PC-9 (cell line): ENCODE measurements at regions of chr9 and their contacts with region 1.

Region 1: DNA sequence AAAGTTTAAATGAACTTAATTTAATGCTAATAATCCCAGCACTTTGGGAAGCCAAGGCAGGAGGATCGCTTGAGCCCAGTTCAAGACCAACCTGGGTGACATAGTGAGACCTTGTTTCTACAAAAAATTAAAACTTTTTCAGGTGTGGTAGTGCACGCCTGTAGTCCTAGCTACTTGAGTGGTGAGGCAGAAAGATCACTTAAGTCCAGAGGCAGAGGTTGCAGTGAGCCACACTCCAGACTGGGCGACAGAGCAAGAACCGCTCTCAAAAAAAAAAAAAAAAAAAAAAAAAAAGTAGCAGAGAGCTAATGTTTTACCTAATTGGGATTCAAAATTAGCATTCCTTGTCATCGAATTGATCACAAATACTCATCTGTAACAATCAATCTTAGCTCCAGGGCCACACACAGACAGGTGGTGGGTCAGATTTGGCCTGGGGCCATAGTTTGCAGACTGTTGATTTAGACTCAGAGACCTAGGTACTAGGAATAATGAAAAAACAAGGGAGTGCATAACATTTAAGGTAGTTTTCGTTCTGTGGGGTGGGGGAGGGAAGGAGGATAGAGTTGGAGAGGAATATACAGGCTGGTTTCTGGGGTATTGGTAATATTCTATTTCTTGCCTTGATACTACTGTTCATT is 21.4 kb downstream of the HSDL2 start:
- DNase-seq: no peak
- H3K4me3 ChIP-seq: no peak overlapping the region
- H3K27ac ChIP-seq: no peak overlapping the region
- H3K4me1 ChIP-seq: no peaks in the 10 kb centered on the region
- H3K27me3 ChIP-seq: no peaks in the 10 kb centered on the region
- CTCF ChIP-seq: no peak

Region 2: GRCh38 chr9:112411626-112412027 is 10.3 kb after region 1 on chr9:
- CTCF ChIA-PET with region 1: no interaction called
- POLR2A ChIA-PET with region 1: interaction called, 13 read pairs
- intact Hi-C with region 1: no loop called
- DNase-seq: no peak
- H3K4me3 ChIP-seq: no peak overlapping the region
- H3K27ac ChIP-seq: no peak overlapping the region
- H3K4me1 ChIP-seq: no peaks in the 10 kb centered on the region
- H3K27me3 ChIP-seq: no peaks in the 10 kb centered on the region
- CTCF ChIP-seq: no peak

Region 3: DNA sequence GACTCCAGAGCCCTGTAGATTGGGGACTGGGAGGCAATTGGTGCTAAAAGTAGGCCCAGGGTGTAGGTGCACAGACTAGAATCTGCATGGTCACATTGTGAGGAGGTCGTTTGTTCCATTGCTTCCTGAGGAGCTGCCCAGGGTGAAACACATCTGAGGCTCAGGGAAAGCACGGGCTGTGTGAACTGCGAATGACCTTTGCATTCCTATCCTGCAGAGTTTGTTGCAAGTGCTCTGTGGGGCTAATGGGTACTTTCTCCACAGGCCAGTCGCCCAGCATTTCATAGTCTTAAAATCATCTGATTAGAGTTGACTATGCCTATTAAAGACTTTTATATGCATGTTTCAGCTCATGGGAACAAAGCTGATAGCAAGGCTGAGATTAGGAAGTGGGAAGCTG is 503.8 kb after region 1 on chr9:
- CTCF ChIA-PET with region 1: no interaction called
- POLR2A ChIA-PET with region 1: no interaction called
- intact Hi-C with region 1: no loop called
- DNase-seq: no peak
- H3K4me3 ChIP-seq: no peak overlapping the region
- H3K27ac ChIP-seq: no peak overlapping the region
- H3K4me1 ChIP-seq: no peaks in the 10 kb centered on the region
- H3K27me3 ChIP-seq: no peaks in the 10 kb centered on the region
- CTCF ChIP-seq: no peak

Region 4: GRCh38 chr9:113095561-113095960 is 694.3 kb after region 1 on chr9:
- CTCF ChIA-PET with region 1: no interaction called
- POLR2A ChIA-PET with region 1: no interaction called
- intact Hi-C with region 1: no loop called
- DNase-seq: no peak
- H3K4me3 ChIP-seq: no peak overlapping the region
- H3K27ac ChIP-seq: no peak overlapping the region
- H3K4me1 ChIP-seq: no peaks in the 10 kb centered on the region
- H3K27me3 ChIP-seq: 0 out of 2 replicates have a peak, but pooled peaks cover 6% of the 10 kb centered on the region
- CTCF ChIP-seq: no peak